KBM-7 (cell line): ENCODE measurements at regions of chr17 and their contacts with region 1.

Region 1: GRCh38 chr17:68435876-68436842 is 21.1 kb downstream of the WIPI1 start:
- DNase-seq: peak; percentile 88

Region 2: GRCh38 chr17:68172461-68172954 is 263.7 kb before region 1 on chr17:
- in situ Hi-C with region 1: loop called (anchors 25 kb)
- DNase-seq: peak; percentile 84

Region 3: GRCh38 chr17:68255731-68256538 is 180.2 kb before region 1 on chr17:
- in situ Hi-C with region 1: loop called (anchors 25 kb)
- DNase-seq: peak; percentile 79

Region 4: DNA sequence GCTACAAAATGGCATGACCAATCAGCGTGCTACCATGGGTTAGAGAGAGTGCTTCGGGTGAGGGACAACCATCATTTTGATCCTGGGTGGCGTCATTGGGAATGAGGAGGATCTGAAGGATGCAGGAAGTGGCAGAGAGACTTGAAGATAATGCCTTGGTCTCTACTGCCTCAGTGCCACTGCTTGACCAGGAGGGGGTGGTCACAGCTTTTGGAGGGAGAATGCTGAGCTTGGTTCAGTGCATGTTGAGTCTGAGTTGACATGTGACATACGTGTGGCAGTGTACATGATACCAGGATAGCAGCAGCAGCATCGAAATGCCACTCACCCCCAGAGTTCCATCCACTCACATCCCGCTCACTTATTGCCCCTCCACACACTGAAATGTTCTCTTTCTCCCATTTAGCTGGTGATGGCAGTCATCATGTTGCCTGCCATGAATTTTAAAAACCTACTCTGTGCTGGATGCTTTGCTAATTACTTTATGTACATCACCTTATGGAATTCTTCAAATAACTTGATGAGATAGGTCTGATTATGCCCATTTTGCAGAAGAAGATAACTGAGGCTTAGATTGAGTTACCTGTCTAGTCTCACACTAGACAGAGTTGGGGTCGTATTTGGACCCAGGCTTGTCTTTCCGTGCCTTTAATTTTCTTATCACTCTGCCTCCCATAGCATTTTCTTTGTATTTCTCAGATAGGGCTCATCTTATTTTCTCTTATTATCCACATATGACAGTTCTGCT is 108.2 kb before region 1 on chr17:
- in situ Hi-C with region 1: no loop called
- DNase-seq: no peak

Region 5: DNA sequence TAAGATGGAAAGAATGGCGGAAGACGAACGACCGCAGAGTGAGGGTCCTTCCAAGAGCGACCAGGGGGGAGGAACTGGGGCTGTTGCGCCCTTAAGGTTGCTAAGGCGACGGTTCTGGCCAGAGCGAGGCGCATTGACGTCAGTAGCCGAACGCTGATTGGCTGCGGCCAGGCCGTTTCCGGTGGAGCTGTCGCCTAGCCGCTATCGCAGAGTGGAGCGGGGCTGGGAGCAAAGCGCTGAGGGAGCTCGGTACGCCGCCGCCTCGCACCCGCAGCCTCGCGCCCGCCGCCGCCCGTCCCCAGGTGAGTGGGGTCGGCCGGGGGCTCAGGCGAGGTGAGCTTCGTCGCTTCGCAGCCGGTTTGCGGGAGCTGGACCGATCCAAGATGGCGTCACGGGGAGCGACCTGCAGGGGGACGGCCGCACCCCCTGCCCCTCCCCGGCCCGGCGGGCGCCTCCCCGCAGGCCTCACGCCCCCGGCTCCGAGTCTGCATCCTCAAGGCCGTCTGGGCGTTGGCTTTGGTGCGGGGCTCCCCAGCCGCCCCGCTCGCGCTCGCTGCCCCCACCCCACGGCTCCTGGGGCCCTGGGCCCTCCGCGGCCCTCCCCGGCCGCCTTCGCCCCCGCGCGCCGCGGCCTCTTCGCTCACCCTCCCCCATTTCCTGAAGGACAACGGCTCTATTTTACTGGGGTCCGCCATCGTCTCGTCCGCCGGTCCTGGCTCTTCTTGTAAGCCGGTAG is 76.3 kb after region 1 on chr17 and contains the start of gene PRKAR1A:
- in situ Hi-C with region 1: no loop called
- DNase-seq: peak; percentile 93

Region 6: GRCh38 chr17:68539548-68540467 is 103.6 kb after region 1 on chr17:
- in situ Hi-C with region 1: no loop called
- DNase-seq: no peak